ENCODE measurements at regions of chr20 and their contacts with region 1.

Region 1: GRCh38 chr20:2314759-2315439 is 19.1 kb downstream of the TGM3 start:
- DNase-seq: peak; percentile 81
- H3K4me3 ChIP-seq: no peak overlapping the region
- H3K27ac ChIP-seq: no peak overlapping the region
- H3K4me1 ChIP-seq: peaks cover 11% of the 10 kb centered on the region
- H3K27me3 ChIP-seq: peaks cover 4% of the 10 kb centered on the region
- CTCF ChIP-seq: no peak

Region 2: DNA sequence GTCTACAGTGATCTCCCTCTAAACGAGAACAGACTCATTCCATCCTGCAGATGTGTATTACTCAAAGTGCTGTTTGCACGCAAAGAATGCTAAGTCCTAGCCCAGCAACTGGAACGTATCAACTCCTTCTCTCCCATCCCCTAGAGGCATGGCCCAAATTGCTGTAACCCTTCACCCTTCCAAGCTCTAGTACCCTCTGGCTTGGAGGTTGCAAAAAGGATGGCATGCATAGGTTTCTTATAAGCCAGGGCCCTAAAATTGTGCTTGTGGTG is 90.6 kb before region 1 on chr20:
- CTCF ChIA-PET with region 1: no interaction called
- dilution Hi-C with region 1: loop called (anchors 5 kb)
- in situ Hi-C with region 1: no loop called
- intact Hi-C with region 1: no loop called
- DNase-seq: no peak
- H3K4me3 ChIP-seq: no peak overlapping the region
- H3K27ac ChIP-seq: no peak overlapping the region
- H3K4me1 ChIP-seq: no peaks in the 10 kb centered on the region
- H3K27me3 ChIP-seq: peaks cover 4% of the 10 kb centered on the region
- CTCF ChIP-seq: no peak

Region 3: GRCh38 chr20:2289471-2289872 is 25.4 kb before region 1 on chr20:
- CTCF ChIA-PET with region 1: no interaction called
- dilution Hi-C with region 1: no loop called
- in situ Hi-C with region 1: no loop called
- intact Hi-C with region 1: no loop called
- DNase-seq: no peak
- H3K4me3 ChIP-seq: no peak overlapping the region
- H3K27ac ChIP-seq: no peak overlapping the region
- H3K4me1 ChIP-seq: peaks cover 13% of the 10 kb centered on the region
- H3K27me3 ChIP-seq: no peaks in the 10 kb centered on the region
- CTCF ChIP-seq: no peak

Measured in mammary epithelial cell (primary cell).